CD8-positive, alpha-beta T cell (primary cell): ENCODE measurements at regions of chr19 and their contacts with region 1.

Region 1: DNA sequence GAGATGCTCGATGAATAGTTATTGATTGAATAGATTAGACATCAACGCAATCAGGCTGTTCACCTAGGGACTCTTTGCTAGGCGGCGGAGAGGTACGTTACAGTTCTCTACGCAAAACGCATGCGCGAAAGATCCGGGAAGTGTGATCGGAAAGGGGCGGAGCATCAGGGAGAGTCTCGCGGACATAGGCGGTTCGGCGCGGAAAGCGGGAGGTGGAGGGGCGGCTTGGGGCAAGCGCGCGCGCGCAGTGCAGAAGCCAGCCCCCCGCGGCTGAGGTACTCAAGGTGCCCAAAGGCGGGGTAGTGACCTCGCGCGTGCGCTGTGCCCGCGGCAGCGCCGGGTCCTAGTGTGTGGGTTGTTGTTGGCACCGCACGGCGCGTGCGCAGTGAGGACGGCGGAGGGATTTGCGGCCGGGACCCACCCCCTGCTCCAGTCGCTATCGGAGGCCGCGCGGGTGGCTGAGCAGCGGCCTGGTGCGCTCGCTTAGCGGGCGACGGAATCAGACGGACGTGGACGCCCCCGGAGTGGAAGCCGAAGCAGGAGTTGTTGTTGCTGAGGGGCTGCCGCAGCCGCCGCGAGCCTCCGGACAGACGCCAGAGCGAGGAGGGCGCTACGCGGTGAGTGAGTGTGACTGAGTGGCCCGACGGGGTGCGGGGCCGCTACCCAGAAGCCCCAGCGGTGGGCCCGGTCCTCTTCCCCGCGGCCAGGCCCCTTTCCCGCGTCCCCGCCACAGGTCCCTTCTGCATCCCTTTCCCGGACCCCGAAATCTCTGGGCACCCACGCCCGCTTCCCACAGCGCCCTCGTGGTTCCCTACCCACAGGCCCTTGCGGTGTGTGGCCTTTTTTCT is at the start of gene SNRNP70:
- DNase-seq: peak; percentile 97 to 100 (median 99)
- ATAC-seq: peak; percentile 97
- H3K4me3 ChIP-seq: peak within 1 kb of the TSS; percentile 85 to 91
- H3K4me3 Mint-ChIP-seq: peak within 1 kb of the TSS; percentile 96
- H3K27ac ChIP-seq: peak within 1 kb of the TSS; percentile 74 to 90
- H3K27ac Mint-ChIP-seq: peak within 1 kb of the TSS; percentile 96
- H3K4me1 ChIP-seq: peaks cover 33% of the 10 kb centered on the region
- H3K4me1 Mint-ChIP-seq: peaks cover 33% of the 10 kb centered on the region
- H3K27me3 ChIP-seq: no peaks in the 10 kb centered on the region
- H3K27me3 Mint-ChIP-seq: peaks cover 4% of the 10 kb centered on the region
- CTCF ChIP-seq: no peak
- total RNA-seq, gene SNRNP70: 341 to 350 TPM

Region 2: GRCh38 chr19:49017666-49018351 is 67.4 kb before region 1 on chr19:
- CTCF ChIA-PET with region 1: no interaction called
- POLR2A ChIA-PET with region 1: no interaction called
- intact Hi-C with region 1: loop called in 1 of 2 experiments (anchors 2 kb)
- DNase-seq: peak; percentile 50 to 81 (median 72)
- ATAC-seq: peak; percentile 86
- H3K4me3 ChIP-seq: peak overlapping the region; percentile 62 to 71
- H3K4me3 Mint-ChIP-seq: peak overlapping the region; percentile 84
- H3K27ac ChIP-seq: peak overlapping the region; percentile 7 to 39
- H3K27ac Mint-ChIP-seq: no peak overlapping the region
- H3K4me1 ChIP-seq: peaks cover 20% of the 10 kb centered on the region
- H3K4me1 Mint-ChIP-seq: peaks cover 28% of the 10 kb centered on the region
- H3K27me3 ChIP-seq: peaks cover 0 to 2% of the 10 kb centered on the region in 2 experiments
- H3K27me3 Mint-ChIP-seq: no peaks in the 10 kb centered on the region
- CTCF ChIP-seq: peak; percentile 71

Region 3: DNA sequence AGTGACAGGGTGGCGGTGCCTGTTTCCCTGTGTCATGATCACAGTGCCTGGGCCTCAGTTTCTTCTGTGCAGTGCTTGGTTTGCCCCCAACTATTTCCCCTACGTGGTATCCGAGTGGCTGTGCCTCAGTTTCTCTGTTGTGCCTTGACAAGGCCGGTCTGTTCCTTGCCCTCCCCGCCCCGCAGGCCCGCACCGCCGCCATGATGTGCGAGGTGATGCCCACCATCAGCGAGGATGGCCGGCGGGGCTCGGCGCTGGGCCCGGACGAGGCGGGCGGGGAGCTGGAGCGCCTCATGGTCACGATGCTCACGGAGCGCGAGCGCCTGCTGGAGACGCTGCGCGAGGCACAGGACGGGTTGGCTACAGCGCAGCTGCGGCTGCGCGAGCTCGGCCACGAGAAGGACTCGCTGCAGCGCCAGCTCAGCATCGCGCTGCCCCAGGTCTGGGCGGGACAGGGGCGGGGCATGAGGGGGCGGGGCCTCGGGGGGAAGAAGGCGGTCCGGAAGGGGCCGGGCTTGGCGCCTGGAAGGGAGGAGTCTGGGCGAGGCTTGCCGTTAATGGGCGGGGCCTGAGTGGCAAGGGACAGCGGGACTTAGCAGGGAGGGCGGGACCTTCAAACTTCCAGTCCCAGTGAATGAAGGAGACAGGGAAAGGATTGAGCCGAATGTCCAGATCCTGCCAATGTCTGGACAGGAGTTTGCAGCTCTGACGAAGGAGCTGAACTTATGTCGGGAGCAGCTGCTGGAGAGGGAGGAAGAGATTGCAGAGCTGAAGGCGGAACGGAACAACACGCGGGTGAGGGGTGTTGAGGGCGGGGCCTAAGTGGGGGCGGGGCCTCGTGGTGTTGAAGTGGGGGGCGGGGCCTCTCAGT is 42.7 kb after region 1 on chr19:
- CTCF ChIA-PET with region 1: no interaction called
- POLR2A ChIA-PET with region 1: no interaction called
- intact Hi-C with region 1: loop called in 1 of 2 experiments (anchors 2 kb)
- DNase-seq: peak; percentile 88 to 97 (median 91)
- ATAC-seq: peak; percentile 96
- H3K4me3 ChIP-seq: peak overlapping the region; percentile 51 to 56
- H3K4me3 Mint-ChIP-seq: peak overlapping the region; percentile 79
- H3K27ac ChIP-seq: no peak overlapping the region
- H3K27ac Mint-ChIP-seq: peak overlapping the region; percentile 80
- H3K4me1 ChIP-seq: peaks cover 11% of the 10 kb centered on the region
- H3K4me1 Mint-ChIP-seq: peaks cover 17% of the 10 kb centered on the region
- H3K27me3 ChIP-seq: no peaks in the 10 kb centered on the region
- H3K27me3 Mint-ChIP-seq: no peaks in the 10 kb centered on the region
- CTCF ChIP-seq: no peak